ENCODE measurements at regions of chr4 and their contacts with region 1.

Region 1: DNA sequence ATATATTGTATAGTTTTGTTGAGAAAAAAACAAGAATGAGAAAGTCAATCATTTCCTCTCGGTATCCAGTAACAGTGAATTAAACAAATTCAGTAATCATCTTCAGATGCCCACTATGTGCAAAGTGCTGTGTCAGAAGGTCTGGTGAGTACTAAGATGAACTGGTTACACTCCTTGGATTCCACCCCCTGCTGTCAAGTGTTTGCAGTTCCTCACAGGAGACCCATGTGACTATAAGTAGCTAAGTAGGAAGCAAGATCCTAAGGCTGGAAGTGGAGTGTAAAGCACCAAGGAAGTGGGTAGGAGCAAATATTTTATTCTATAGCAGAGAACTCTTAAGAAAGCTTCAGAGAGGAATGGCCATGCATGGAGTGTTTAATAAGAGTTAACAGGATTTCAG is 73.6 kb downstream of the SNX25 start:
- DNase-seq: no peak
- H3K4me3 ChIP-seq: no peak overlapping the region
- CTCF ChIP-seq: peak; percentile 2

Region 2: GRCh38 chr4:185149392-185149791 is 133.6 kb before region 1 on chr4:
- CTCF ChIA-PET with region 1: no interaction called
- POLR2A ChIA-PET with region 1: no interaction called
- DNase-seq: no peak
- H3K4me3 ChIP-seq: no peak overlapping the region
- CTCF ChIP-seq: no peak

Region 3: DNA sequence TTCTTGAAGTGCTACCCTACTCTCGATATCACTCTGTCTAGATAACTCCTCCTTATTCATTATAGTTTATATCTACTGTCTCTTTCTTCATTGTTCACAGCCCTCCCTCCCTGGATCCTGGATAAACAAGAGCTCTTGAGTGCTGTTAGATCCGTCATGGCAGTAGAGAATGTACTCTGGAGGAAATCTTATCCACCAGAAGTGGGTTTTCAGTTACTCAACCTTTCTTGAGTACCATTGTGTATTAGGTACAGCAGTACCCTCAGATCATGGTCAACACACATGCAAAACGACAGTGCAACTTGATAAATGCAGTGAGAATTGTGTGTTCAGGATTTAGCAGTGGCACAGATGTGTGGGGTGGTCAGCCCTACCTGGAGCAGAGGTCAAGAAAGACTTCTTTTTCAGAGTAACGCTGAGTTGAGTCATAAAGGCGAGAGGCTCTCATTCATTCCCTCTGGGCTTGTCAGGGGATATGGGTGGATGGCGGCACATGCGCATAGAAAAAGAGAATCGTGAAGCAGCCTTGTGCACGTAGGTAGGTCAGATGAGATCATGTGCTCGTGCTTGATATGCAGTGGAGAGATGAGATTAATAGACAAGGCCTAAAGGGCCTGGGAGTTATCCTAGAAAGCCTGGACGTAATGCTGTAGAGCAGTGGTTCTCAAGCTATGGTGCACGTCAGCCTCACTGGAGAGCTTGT is 15.9 kb after region 1 on chr4:
- CTCF ChIA-PET with region 1: interaction called, 10 read pairs
- POLR2A ChIA-PET with region 1: interaction called, 3 read pairs
- DNase-seq: no peak
- H3K4me3 ChIP-seq: no peak overlapping the region
- CTCF ChIP-seq: no peak